MCF 10A (cell line): ENCODE measurements at regions of chr4 and their contacts with region 1.

Region 1: DNA sequence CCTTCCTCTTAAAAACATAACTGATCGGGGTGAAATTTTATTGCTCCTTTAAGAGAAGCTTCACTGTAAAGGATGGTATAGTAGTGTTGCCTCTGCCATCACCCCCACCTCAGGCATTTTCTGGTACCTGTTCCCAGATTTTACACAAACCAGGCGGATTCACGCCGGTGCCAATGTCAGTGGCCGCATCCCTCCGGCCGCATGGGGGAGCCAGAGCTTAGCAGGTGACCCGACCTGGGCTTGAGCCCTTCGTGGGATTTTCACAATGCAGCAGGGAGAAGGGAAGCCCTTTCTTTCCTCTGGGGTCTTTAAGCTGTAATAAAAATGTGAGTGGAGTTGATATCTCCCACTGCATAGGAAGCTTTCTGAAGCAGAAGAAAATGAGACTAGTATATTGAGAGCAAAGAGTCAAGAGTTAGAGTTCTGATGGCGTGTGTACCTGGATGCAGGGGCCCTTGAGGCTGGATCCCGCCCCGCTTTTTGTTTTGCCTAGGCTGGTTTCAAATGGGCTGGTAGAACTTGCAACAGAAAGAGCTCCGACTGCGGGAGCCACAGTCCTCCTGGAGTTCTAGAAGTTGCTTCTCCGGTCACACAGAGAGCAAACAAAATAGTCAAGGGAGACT is 59.4 kb downstream of the POLR2B start:
- DNase-seq: peak; percentile 76
- H3K4me3 Mint-ChIP-seq: no peak overlapping the region
- H3K27ac Mint-ChIP-seq: no peak overlapping the region
- H3K4me1 Mint-ChIP-seq: peaks cover 24% of the 10 kb centered on the region
- H3K27me3 Mint-ChIP-seq: no peaks in the 10 kb centered on the region
- CTCF ChIP-seq: peak; percentile 89

Region 2: DNA sequence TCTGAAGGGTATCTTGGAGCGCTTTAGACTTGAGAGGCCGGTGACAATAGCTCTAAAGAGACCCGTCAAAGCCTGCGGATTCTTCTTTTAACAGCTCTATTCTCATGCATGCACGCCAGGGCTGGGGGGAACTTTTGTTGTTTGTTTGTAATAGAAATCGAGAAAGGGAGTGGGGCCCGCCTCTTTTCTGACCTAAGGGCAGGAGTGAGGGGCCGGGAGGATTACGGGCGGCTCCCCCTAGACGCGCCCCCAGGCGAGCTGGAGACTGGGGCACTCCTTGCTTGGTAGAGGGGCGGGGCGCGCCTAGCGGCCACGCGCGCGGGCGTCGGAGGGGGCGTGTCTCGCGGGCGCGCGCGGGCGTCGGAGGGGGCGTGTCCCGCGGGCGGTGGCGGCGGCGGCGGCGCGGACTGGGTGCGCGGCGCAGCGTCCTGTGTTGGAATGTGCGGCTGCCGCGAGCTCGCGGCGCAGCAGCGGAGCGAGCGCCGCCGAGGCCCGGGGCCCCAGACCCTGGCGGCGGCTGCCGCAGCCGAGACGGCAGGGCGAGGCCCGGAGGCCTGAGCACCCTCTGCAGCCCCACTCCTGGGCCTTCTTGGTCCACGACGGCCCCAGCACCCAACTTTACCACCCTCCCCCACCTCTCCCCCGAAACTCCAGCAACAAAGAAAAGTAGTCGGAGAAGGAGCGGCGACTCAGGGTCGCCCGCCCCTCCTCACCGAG is 130.4 kb before region 1 on chr4 and contains the start of gene REST:
- CTCF ChIA-PET with region 1: no interaction called
- POLR2A ChIA-PET with region 1: no interaction called
- intact Hi-C with region 1: no loop called
- DNase-seq: peak; percentile 63
- H3K4me3 Mint-ChIP-seq: peak within 1 kb of the TSS; percentile 97
- H3K27ac Mint-ChIP-seq: peak within 1 kb of the TSS; percentile 85
- H3K4me1 Mint-ChIP-seq: peaks cover 18% of the 10 kb centered on the region
- H3K27me3 Mint-ChIP-seq: no peaks in the 10 kb centered on the region
- CTCF ChIP-seq: no peak
- total RNA-seq, gene REST: 50.5 and 51.6 TPM in 2 replicates

Region 3: GRCh38 chr4:56999751-57000150 is 38.3 kb before region 1 on chr4:
- CTCF ChIA-PET with region 1: no interaction called
- POLR2A ChIA-PET with region 1: no interaction called
- intact Hi-C with region 1: no loop called
- DNase-seq: no peak
- H3K4me3 Mint-ChIP-seq: no peak overlapping the region
- H3K27ac Mint-ChIP-seq: no peak overlapping the region
- H3K4me1 Mint-ChIP-seq: peaks cover 6% of the 10 kb centered on the region
- H3K27me3 Mint-ChIP-seq: no peaks in the 10 kb centered on the region
- CTCF ChIP-seq: no peak

Region 4: GRCh38 chr4:57074744-57075143 is 36.7 kb after region 1 on chr4:
- CTCF ChIA-PET with region 1: interaction called, 14 read pairs
- POLR2A ChIA-PET with region 1: interaction called, 6 read pairs
- intact Hi-C with region 1: no loop called
- DNase-seq: peak; percentile 89
- H3K4me3 Mint-ChIP-seq: peak overlapping the region; percentile 15
- H3K27ac Mint-ChIP-seq: peak overlapping the region; percentile 95
- H3K4me1 Mint-ChIP-seq: peaks cover 51% of the 10 kb centered on the region
- H3K27me3 Mint-ChIP-seq: no peaks in the 10 kb centered on the region
- CTCF ChIP-seq: no peak

Region 5: DNA sequence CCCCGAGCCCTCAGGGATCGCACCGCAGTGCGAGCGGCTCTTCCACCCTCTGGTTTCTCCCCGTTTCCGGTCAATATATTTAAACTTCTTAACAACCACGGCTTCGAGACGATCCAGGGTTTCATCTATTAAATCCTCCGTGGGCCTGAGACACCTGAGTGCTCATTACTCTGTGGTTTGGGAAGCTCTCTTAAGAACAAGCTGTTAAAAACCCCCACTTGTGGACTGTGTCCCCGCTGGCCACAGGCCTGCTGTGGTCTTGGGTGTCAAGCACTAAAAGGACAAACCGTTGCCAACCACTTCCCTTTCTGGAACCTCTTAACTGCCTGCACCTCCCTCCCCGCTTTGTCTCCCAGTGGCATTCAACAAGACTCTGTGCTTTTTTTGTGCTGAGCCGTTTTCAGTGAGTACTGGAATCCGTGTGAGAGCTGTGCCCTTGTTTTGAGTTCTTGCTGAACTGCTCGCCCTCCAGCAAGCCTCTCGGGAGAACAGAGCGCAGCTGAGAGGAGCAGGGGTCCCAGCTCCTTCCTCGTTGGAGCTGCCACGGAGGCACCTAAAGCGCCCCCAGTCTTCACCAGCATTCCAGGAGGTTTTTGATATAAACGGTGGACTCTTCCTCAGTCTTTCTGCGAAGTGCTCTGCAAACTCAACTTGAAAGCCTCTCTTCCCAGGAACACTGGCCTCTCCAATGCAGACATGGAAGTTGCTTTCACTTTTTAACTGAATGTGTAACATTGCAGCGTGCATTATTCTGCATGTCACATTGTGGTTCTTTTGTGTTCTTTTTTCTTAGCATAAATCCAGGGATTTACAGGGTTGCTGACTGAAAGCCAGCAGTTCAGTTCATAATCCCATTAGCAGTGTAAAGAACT is 72.8 kb after region 1 on chr4:
- CTCF ChIA-PET with region 1: interaction called, 8 read pairs
- POLR2A ChIA-PET with region 1: no interaction called
- intact Hi-C with region 1: loop called (anchors 10 kb)
- DNase-seq: no peak
- H3K4me3 Mint-ChIP-seq: peak overlapping the region; percentile 68
- H3K27ac Mint-ChIP-seq: no peak overlapping the region
- H3K4me1 Mint-ChIP-seq: peaks cover 30% of the 10 kb centered on the region
- H3K27me3 Mint-ChIP-seq: no peaks in the 10 kb centered on the region
- CTCF ChIP-seq: no peak

Region 6: GRCh38 chr4:57148831-57149505 is 110.9 kb after region 1 on chr4:
- CTCF ChIA-PET with region 1: interaction called, 10 read pairs
- POLR2A ChIA-PET with region 1: interaction called, 5 read pairs
- intact Hi-C with region 1: no loop called
- DNase-seq: peak; percentile 63
- H3K4me3 Mint-ChIP-seq: no peak overlapping the region
- H3K27ac Mint-ChIP-seq: no peak overlapping the region
- H3K4me1 Mint-ChIP-seq: peaks cover 24% of the 10 kb centered on the region
- H3K27me3 Mint-ChIP-seq: no peaks in the 10 kb centered on the region
- CTCF ChIP-seq: no peak

Region 7: DNA sequence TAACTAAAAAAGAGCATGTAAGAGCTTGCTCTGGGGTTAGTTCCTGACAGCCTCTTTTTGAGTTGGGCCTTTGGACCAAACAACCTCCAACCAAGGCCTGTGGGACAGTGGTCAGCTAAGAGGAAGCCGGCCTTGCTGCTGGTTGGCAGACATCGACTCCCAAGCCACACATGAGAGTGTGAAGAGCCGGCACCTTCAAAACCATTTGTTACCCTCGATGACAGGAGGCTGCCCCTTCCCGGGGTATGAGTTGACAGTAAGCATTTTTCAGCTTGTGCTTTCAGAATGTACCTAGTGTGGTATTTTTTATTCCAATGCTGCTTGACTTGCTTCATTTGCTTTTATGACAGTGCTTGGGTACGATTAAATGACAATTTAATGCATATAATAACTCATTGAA is 240.7 kb after region 1 on chr4:
- CTCF ChIA-PET with region 1: no interaction called
- POLR2A ChIA-PET with region 1: no interaction called
- intact Hi-C with region 1: no loop called
- DNase-seq: no peak
- H3K4me3 Mint-ChIP-seq: no peak overlapping the region
- H3K27ac Mint-ChIP-seq: no peak overlapping the region
- H3K4me1 Mint-ChIP-seq: no peaks in the 10 kb centered on the region
- H3K27me3 Mint-ChIP-seq: no peaks in the 10 kb centered on the region
- CTCF ChIP-seq: no peak

Region 8: DNA sequence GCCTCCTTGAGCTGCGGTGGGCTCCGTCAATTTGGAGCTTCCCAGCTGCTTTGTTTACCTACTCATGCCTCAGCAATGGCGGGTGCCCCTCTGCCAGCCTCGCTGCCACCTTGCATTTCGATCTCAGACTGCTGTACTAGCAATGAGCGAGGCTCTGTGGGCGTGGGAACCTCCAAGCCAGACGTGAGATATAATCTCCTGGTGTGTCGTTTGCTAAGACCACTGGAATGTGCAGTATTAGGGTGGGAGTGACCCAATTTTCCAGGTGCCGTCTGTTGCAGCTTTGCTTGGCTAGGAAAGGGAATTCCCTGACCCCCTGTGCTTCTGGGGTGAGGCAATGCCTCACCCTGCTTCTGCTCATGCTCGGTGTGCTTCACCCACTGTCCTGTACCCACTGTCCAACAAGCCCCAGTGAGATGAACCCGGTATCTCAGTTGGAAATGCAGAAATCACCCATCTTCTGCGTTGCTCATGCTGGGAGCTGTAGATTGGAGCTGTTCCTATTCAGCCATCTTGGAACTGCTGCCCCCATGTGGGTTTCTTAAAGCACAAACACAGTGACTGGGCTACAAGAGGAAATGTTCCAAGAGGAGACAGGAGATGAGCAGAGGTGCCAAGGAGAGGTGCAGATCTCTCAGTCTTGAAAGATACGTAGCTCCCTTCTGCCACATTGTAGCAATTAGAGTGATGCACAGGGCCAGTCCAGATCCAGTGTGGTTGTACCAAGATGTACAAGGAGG is 265.1 kb after region 1 on chr4:
- CTCF ChIA-PET with region 1: no interaction called
- POLR2A ChIA-PET with region 1: no interaction called
- intact Hi-C with region 1: loop called (anchors 5 kb)
- DNase-seq: peak; percentile 40
- H3K4me3 Mint-ChIP-seq: no peak overlapping the region
- H3K27ac Mint-ChIP-seq: peak overlapping the region; percentile 16
- H3K4me1 Mint-ChIP-seq: peaks cover 9% of the 10 kb centered on the region
- H3K27me3 Mint-ChIP-seq: no peaks in the 10 kb centered on the region
- CTCF ChIP-seq: no peak